Transverse colon (tissue), 4 donors: ENCODE measurements at regions of chr3 and their contacts with region 1.

Region 1: GRCh38 chr3:153111016-153111415 is 51.0 kb upstream of the RAP2B start:
- DNase-seq: no peak
- H3K4me3 ChIP-seq: no peak overlapping the region
- H3K27ac ChIP-seq: no peak overlapping the region
- H3K4me1 ChIP-seq: no peaks in the 10 kb centered on the region
- H3K27me3 ChIP-seq: no peaks in the 10 kb centered on the region
- CTCF ChIP-seq: no peak
- EP300 ChIP-seq: no peak
- POLR2A ChIP-seq: no peak

Region 2: DNA sequence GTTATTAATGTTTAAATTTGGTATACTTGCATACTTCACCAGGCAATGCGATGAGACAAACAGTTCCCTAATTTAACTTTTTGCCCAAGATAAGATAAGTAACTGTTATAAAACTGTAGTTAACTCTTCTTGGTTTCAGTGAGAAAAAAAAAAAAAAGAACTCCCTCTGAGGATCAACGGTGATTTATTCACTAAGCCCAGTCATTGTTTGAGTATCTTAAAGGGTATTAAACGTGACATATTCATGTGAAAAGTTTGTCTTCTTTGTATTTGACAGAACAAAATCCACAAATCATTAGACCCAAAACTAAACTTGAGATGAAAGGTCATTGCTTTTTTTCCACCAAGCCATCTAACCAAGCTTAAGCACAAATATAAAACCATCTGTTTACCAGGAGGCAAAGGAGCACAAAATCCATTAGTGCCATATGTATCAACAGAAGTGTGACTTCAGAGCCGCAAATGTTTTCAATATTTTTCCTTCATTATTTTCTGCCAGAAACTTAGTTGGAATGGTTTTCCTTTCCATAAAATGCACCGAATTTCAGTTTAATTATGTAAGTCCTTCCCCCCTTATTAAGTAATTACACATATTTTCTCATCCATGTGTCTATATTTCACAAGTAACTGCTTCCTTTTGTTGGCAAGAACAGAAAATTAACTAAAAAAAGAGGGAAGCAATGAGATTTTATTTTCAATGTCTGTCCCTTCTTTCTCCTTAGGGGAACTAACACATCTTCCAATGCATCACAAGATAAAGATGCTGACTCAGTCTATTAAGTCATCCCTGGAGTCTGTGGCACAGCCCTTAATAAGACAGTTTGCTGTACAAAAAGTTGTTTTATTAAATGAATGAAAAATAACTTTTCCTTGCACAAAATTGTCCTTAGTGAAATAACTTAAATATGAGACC is 41.2 kb before region 1 on chr3:
- in situ Hi-C with region 1: no loop called
- intact Hi-C with region 1: loop called (anchors 2 kb)
- DNase-seq: no peak
- H3K4me3 ChIP-seq: no peak overlapping the region
- H3K27ac ChIP-seq: no peak overlapping the region
- H3K4me1 ChIP-seq: no peaks in the 10 kb centered on the region
- H3K27me3 ChIP-seq: no peaks in the 10 kb centered on the region
- CTCF ChIP-seq: no peak
- EP300 ChIP-seq: no peak
- POLR2A ChIP-seq: no peak